Naive thymus-derived CD4-positive, alpha-beta T cell (primary cell): ENCODE measurements at regions of chr2 and their contacts with region 1.

Region 1: GRCh38 chr2:148509288-148509902 is 135.2 kb upstream of the EPC2 start:
- DNase-seq: peak; percentile 54 to 86 (median 78)
- ATAC-seq: peak; percentile 100
- H3K4me3 ChIP-seq: peak overlapping the region; percentile 51
- H3K4me3 Mint-ChIP-seq: peak overlapping the region; percentile 65 to 91 (median 84)
- H3K27ac ChIP-seq: peak overlapping the region; percentile 37
- H3K27ac Mint-ChIP-seq: peak overlapping the region; percentile 13 to 90 (median 88)
- H3K4me1 ChIP-seq: no peaks in the 10 kb centered on the region
- H3K4me1 Mint-ChIP-seq: peaks cover 3 to 29% (median 16%) of the 10 kb centered on the region in 7 donors
- H3K27me3 ChIP-seq: no peaks in the 10 kb centered on the region
- H3K27me3 Mint-ChIP-seq: no peaks in the 10 kb centered on the region

Region 2: DNA sequence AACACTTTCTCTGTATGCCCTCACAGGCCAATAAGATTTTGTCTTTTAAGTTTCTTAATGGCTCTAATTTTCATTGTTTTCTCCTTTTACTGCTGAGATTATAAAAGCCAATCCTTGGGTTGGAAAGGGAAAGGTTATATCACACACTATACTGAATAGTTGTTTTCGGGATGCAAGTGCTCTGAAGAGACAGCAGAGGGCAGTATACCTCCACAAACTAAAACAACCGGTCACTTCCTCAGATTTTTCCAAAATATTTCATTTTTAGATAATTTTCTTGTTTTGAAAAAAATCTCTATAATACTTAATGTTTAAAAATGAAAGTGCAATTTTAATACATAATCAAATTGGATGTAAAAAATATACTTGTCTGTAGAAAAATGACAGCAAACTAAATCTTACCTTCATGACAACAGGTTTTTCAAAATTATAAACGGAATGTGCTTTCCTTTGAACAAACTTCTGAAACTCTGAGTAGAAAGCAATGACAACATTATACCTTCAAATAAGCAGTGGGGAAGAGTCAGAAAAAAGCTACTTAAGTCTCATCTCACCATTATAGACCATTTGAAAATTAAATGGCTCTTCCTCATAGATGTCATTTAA is 571.5 kb before region 1 on chr2:
- CTCF ChIA-PET with region 1: interaction called, 20 read pairs
- POLR2A ChIA-PET with region 1: no interaction called
- intact Hi-C with region 1: loop called (anchors 1 kb)
- DNase-seq: peak in 5 of 9 donors; percentile 25 to 40 (median 34)
- ATAC-seq: peak; percentile 79
- H3K4me3 ChIP-seq: no peak overlapping the region
- H3K4me3 Mint-ChIP-seq: no peak overlapping the region
- H3K27ac ChIP-seq: no peak overlapping the region
- H3K27ac Mint-ChIP-seq: peak overlapping the region in 4 of 9 donors; percentile 26 to 75 (median 42)
- H3K4me1 ChIP-seq: no peaks in the 10 kb centered on the region
- H3K4me1 Mint-ChIP-seq: peaks cover 0 to 2% (median 0%) of the 10 kb centered on the region in 7 donors
- H3K27me3 ChIP-seq: no peaks in the 10 kb centered on the region
- H3K27me3 Mint-ChIP-seq: no peaks in the 10 kb centered on the region

Region 3: DNA sequence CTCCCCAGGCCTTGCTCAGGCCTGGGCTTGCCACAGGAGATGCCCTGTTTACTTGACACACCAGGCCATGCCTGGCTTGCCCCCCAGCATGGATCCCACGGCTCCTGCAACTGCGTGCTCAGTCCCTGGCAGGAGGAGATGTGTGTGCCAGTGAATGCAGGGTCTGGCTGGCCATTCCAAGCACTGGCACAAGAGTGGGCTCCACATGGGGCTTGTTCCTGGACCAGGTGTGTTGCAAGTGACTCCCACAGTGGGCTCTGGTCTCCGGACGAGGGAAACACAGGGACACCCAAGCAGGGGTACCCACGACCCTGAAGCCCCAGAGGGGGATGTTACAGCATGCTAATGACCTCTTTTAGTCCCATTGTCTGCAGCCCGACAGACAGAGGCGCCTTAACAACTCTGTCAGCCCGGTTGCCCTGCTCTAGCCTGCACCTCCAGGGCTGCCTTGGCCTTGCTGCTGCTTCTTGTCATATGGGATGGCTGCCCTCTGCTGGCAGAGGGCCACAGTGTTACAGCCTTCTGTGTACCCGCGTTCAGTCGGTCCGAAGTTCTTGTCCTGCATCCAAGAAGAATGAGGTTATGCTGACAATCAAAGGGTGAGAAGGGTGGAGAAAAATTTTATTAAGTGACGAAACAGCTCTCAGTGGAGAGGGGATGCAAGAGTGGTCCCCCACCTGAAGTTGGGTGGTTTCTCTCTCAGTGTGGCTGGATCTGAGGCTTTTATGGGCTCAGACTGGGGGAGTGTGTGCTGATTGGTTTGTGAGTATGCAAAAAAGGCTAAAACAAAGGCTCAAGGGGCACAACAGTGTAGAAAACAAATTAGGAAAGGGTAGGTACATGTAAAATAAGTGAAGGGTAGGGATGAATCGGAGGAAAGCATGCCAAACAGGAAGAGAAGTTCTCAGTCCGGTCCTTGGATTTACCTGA is 308.1 kb before region 1 on chr2:
- CTCF ChIA-PET with region 1: no interaction called
- POLR2A ChIA-PET with region 1: no interaction called
- intact Hi-C with region 1: loop called (anchors 5 to 10 kb)
- DNase-seq: peak in 8 of 9 donors; percentile 2 to 41 (median 24)
- ATAC-seq: peak; percentile 61
- H3K4me3 ChIP-seq: no peak overlapping the region
- H3K4me3 Mint-ChIP-seq: no peak overlapping the region
- H3K27ac ChIP-seq: no peak overlapping the region
- H3K27ac Mint-ChIP-seq: no peak overlapping the region
- H3K4me1 ChIP-seq: no peaks in the 10 kb centered on the region
- H3K4me1 Mint-ChIP-seq: peaks cover 0 to 7% (median 0%) of the 10 kb centered on the region in 7 donors
- H3K27me3 ChIP-seq: no peaks in the 10 kb centered on the region
- H3K27me3 Mint-ChIP-seq: no peaks in the 10 kb centered on the region

Region 4: GRCh38 chr2:148552675-148553331 is 43.4 kb after region 1 on chr2:
- CTCF ChIA-PET with region 1: interaction called, 4 read pairs
- POLR2A ChIA-PET with region 1: interaction called, 11 read pairs
- intact Hi-C with region 1: loop called in 1 of 2 experiments (anchors 1 kb)
- DNase-seq: peak in 7 of 9 donors; percentile 18 to 64 (median 53)
- ATAC-seq: peak; percentile 77
- H3K4me3 ChIP-seq: peak overlapping the region; percentile 75
- H3K4me3 Mint-ChIP-seq: no peak overlapping the region
- H3K27ac ChIP-seq: peak overlapping the region; percentile 70
- H3K27ac Mint-ChIP-seq: no peak overlapping the region
- H3K4me1 ChIP-seq: peaks cover 5 to 12% of the 10 kb centered on the region in 2 donors
- H3K4me1 Mint-ChIP-seq: peaks cover 1 to 13% (median 7%) of the 10 kb centered on the region in 7 donors
- H3K27me3 ChIP-seq: no peaks in the 10 kb centered on the region
- H3K27me3 Mint-ChIP-seq: no peaks in the 10 kb centered on the region

Region 5: GRCh38 chr2:148565272-148565894 is 56.0 kb after region 1 on chr2:
- CTCF ChIA-PET with region 1: no interaction called
- POLR2A ChIA-PET with region 1: no interaction called
- intact Hi-C with region 1: no loop called
- DNase-seq: no peak
- ATAC-seq: no peak
- H3K4me3 ChIP-seq: no peak overlapping the region
- H3K4me3 Mint-ChIP-seq: no peak overlapping the region
- H3K27ac ChIP-seq: no peak overlapping the region
- H3K27ac Mint-ChIP-seq: no peak overlapping the region
- H3K4me1 ChIP-seq: peaks cover 0 to 5% of the 10 kb centered on the region in 2 donors
- H3K4me1 Mint-ChIP-seq: peaks cover 1 to 15% (median 12%) of the 10 kb centered on the region in 7 donors
- H3K27me3 ChIP-seq: no peaks in the 10 kb centered on the region
- H3K27me3 Mint-ChIP-seq: peaks cover 0 to 7% (median 0%) of the 10 kb centered on the region in 5 donors

Region 6: GRCh38 chr2:149098701-149099100 is 589.3 kb after region 1 on chr2:
- CTCF ChIA-PET with region 1: no interaction called
- POLR2A ChIA-PET with region 1: no interaction called
- intact Hi-C with region 1: no loop called
- DNase-seq: no peak
- ATAC-seq: no peak
- H3K4me3 ChIP-seq: no peak overlapping the region
- H3K4me3 Mint-ChIP-seq: no peak overlapping the region
- H3K27ac ChIP-seq: no peak overlapping the region
- H3K27ac Mint-ChIP-seq: no peak overlapping the region
- H3K4me1 ChIP-seq: no peaks in the 10 kb centered on the region
- H3K4me1 Mint-ChIP-seq: peaks cover 0 to 2% (median 0%) of the 10 kb centered on the region in 7 donors
- H3K27me3 ChIP-seq: no peaks in the 10 kb centered on the region
- H3K27me3 Mint-ChIP-seq: peaks cover 11 to 21% (median 14%) of the 10 kb centered on the region in 5 donors